ENCODE measurements at regions of chr11 and their contacts with region 1.

Region 1: DNA sequence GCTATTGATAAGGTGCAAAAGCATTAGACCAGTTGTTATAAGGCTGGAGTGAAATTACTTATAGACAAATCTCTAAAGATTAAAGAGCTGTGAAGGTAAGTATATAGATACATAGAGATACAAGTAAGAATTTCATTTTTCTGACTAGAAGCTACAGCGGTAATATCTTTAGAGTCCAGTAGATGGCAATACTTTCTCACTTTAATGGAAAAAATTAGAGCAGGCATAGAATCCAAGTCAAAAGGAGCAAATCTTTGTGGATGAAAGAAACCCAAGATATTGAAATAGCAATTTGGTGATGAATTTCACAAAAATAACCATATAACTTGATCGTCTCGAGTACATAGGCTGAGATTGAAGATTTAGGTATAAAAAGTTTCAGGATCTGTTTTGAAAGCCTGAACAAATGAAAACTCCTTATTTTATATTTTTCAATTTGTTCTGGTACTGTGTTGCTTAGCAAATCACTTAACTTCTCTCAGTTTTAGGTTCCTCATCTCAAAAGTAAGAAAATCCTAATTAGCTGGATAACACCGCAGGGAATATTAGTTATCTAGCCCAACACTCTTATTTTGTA is 81.9 kb downstream of the UVRAG start:
- DNase-seq: peak; percentile 31
- H3K27ac ChIP-seq: no peak overlapping the region
- CTCF ChIP-seq: peak; percentile 73

Region 2: GRCh38 chr11:76152086-76152681 is 255.3 kb after region 1 on chr11:
- CTCF ChIA-PET with region 1: interaction called, 21 read pairs
- POLR2A ChIA-PET with region 1: no interaction called
- DNase-seq: peak; percentile 83
- H3K27ac ChIP-seq: no peak overlapping the region
- CTCF ChIP-seq: peak; percentile 89

Region 3: GRCh38 chr11:76637491-76638269 is 740.7 kb after region 1 on chr11:
- CTCF ChIA-PET with region 1: no interaction called
- POLR2A ChIA-PET with region 1: no interaction called
- DNase-seq: no peak
- H3K27ac ChIP-seq: no peak overlapping the region
- CTCF ChIP-seq: no peak

Measured in RWPE1 (cell line).